ENCODE measurements at regions of chr1 and their contacts with region 1.

Region 1: GRCh38 chr1:169119405-169119804 is 12.9 kb downstream of the ATP1B1 start:
- DNase-seq: peak; percentile 74 to 91
- ATAC-seq: peak; percentile 79 to 81
- H3K4me3 ChIP-seq: 0 out of 3 replicates have a peak overlapping the region, but pooled peaks have one; percentile 2
- H3K27ac ChIP-seq: peak overlapping the region; percentile 96 to 98
- H3K4me1 ChIP-seq: peaks cover 96% of the 10 kb centered on the region
- CTCF ChIP-seq: no peak
- EP300 ChIP-seq: no peak; a peak in 1 of 5 replicates
- POLR2A ChIP-seq: no peak
- RAD21 ChIP-seq: no peak

Region 2: GRCh38 chr1:169106095-169106920 is 13.1 kb before region 1 on chr1 and contains the start of gene ATP1B1:
- CTCF ChIA-PET with region 1: interaction called, 5 read pairs
- POLR2A ChIA-PET with region 1: interaction called, 42 read pairs
- DNase-seq: peak; percentile 90 to 91
- ATAC-seq: peak; percentile 63 to 83
- H3K4me3 ChIP-seq: peak within 1 kb of the TSS; percentile 92
- H3K27ac ChIP-seq: peak within 1 kb of the TSS; percentile 96 to 98
- H3K4me1 ChIP-seq: peaks cover 43% of the 10 kb centered on the region
- CTCF ChIP-seq: no peak
- EP300 ChIP-seq: no peak
- POLR2A ChIP-seq: peak; percentile 97
- RAD21 ChIP-seq: peak; percentile 10 to 50; a peak in 3 of 5 replicates
- polyA plus RNA-seq, gene ATP1B1: 323 and 377 TPM in 2 replicates

Region 3: DNA sequence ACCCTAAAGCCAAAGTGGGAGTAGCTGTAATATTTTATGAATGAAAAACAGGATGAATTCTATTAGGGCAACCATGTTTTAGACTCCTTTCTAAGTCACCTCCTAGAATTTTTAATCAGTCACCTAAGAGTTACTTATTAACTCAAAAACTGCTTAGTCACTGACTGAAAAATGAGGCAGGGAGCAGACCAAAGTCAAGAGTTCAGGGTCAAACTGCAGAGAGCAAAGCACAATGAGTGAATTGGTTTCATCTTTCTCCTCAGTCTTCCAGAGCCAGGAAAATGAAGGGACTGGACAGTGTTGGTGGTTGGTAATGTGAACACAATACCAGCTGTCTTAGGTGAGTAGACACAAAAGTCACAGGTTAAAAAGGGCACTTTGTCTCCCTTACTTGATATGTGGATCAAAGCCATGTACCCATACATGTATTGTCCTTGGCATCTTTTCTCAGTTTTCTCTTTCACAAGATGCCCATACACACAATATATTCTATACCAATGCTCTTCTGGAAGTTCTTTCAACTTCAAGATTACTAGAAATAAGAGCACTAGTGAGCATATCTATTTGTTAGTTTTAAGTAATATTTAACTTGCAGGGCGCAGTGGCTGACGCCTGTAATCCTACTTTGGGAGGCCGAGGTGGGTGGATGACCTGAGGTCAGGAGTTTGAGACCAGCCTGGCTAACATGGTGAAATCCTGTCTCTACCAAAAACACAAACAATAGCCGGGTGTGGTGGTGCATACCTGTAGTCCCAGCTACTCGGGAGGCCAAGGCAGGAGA is 29.3 kb after region 1 on chr1:
- CTCF ChIA-PET with region 1: no interaction called
- POLR2A ChIA-PET with region 1: no interaction called
- DNase-seq: peak; percentile 58 to 84
- ATAC-seq: peak; percentile 59 to 61; a peak in 5 of 6 replicates
- H3K4me3 ChIP-seq: no peak overlapping the region
- H3K27ac ChIP-seq: peak overlapping the region; percentile 89 to 95
- H3K4me1 ChIP-seq: peaks cover 62% of the 10 kb centered on the region
- CTCF ChIP-seq: no peak
- EP300 ChIP-seq: no peak
- POLR2A ChIP-seq: no peak
- RAD21 ChIP-seq: peak; percentile 15 to 33; a peak in 2 of 5 replicates

Region 4: GRCh38 chr1:169367486-169368405 is 248.3 kb after region 1 on chr1 and contains the starts of genes BLZF1 and NME7:
- CTCF ChIA-PET with region 1: no interaction called
- POLR2A ChIA-PET with region 1: no interaction called
- DNase-seq: peak; percentile 92 to 97
- ATAC-seq: peak; percentile 99
- H3K4me3 ChIP-seq: peak within 1 kb of the TSS; percentile 84
- H3K27ac ChIP-seq: peak within 1 kb of the TSS; percentile 78 to 88
- H3K4me1 ChIP-seq: peaks cover 20% of the 10 kb centered on the region; the same call in 2 of the 3 replicates
- CTCF ChIP-seq: no peak
- EP300 ChIP-seq: no peak
- POLR2A ChIP-seq: peak; percentile 40
- RAD21 ChIP-seq: no peak
- polyA plus RNA-seq, gene BLZF1: 20.9 and 29.6 TPM in 2 replicates
- polyA plus RNA-seq, gene NME7: 29.6 and 39.5 TPM in 2 replicates

Measured in A549 (cell line).